ENCODE measurements at regions of chr12 and their contacts with region 1.

Region 1: GRCh38 chr12:49358483-49359141 is 8.7 kb upstream of the SPATS2 start:
- DNase-seq: no peak
- H3K4me3 ChIP-seq: no peak overlapping the region
- H3K27ac ChIP-seq: no peak overlapping the region
- H3K27me3 ChIP-seq: no peaks in the 10 kb centered on the region
- CTCF ChIP-seq: peak; percentile 82

Region 2: GRCh38 chr12:49288412-49288853 is 70.2 kb before region 1 on chr12:
- CTCF ChIA-PET with region 1: interaction called, 56 read pairs
- POLR2A ChIA-PET with region 1: no interaction called
- DNase-seq: no peak
- H3K4me3 ChIP-seq: no peak overlapping the region
- H3K27ac ChIP-seq: no peak overlapping the region
- H3K27me3 ChIP-seq: peaks cover 16% of the 10 kb centered on the region
- CTCF ChIP-seq: peak; percentile 79

Region 3: DNA sequence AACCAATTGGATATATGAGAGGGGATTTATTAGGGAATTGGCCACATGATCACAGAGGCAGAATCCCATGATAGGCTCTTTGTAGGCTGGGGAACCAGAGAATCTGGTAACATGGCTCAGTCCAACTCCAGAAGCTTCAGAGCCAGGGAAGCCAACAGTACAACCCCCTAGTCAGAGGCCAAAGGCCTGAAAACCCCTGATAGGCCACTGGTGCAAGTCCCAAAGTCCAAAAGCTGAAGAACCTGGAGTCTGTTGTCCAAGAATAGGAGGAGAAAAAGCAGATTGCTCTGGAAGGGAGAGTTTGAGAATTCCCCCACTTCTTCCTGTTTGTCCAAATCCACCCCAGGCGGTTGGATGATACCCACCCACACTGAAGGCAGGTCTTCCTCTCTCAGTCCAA is 43.8 kb before region 1 on chr12:
- CTCF ChIA-PET with region 1: no interaction called
- POLR2A ChIA-PET with region 1: no interaction called
- DNase-seq: no peak
- H3K4me3 ChIP-seq: no peak overlapping the region
- H3K27ac ChIP-seq: no peak overlapping the region
- H3K27me3 ChIP-seq: peaks cover 4% of the 10 kb centered on the region
- CTCF ChIP-seq: no peak

Region 4: DNA sequence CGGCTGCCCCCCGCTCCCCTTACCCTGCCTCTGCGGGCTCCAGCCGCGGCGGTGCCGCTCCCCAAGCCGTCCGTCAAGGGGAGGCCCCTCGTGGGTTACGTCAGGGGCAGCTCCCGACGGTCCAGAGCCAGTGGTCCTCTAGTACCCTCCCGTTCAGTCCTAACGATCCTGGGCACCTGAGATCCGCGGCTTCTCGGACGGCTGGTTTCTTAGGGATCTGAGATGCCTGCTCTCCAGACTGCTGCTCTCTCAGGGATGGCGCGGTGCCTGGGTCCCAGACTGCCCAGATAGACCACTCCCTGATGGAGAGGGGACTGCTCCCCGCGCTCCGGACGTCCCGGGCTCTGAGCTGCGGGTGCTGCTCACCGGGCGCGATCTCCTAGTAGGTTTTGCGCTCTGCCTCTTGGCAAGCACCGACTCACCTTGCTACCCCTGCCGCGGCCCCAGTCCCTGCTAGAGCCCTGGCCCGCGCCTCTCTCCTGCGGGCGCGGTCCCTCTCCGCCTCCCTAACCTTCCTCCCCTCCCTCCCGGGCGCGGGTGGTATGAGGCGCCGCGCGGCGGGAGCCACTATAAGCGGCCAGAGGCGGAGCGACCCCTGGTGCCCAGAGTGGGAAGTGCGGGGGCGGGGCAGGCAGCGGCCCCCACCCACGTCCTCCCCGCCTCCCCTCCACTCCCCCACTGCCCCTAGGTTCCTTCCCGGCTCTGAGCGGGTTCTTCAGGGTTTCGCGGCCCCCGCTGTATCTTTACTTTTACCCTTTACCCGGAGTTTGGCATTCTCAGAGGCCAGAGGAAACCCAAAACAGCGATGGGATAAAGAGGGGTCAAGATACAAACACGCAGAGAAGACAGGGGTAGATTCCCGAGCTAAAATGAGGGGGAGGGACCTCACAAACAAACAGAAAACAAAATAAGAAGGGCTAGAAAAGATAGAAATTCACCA is 21.7 kb before region 1 on chr12 and contains the start of gene C1QL4:
- CTCF ChIA-PET with region 1: interaction called, 72 read pairs
- POLR2A ChIA-PET with region 1: no interaction called
- DNase-seq: no peak
- H3K4me3 ChIP-seq: peak within 1 kb of the TSS; percentile 52
- H3K27ac ChIP-seq: no peak within 1 kb of the TSS
- H3K27me3 ChIP-seq: peaks cover 72% of the 10 kb centered on the region
- CTCF ChIP-seq: peak; percentile 83
- polyA plus RNA-seq, gene C1QL4: 0.06 TPM in 1 of 2 replicates, not detected in the other

Region 5: GRCh38 chr12:49397000-49397399 is 38.4 kb after region 1 on chr12:
- CTCF ChIA-PET with region 1: interaction called, 10 read pairs
- POLR2A ChIA-PET with region 1: no interaction called
- DNase-seq: no peak
- H3K4me3 ChIP-seq: no peak overlapping the region
- H3K27ac ChIP-seq: no peak overlapping the region
- H3K27me3 ChIP-seq: no peaks in the 10 kb centered on the region
- CTCF ChIP-seq: no peak

Region 6: DNA sequence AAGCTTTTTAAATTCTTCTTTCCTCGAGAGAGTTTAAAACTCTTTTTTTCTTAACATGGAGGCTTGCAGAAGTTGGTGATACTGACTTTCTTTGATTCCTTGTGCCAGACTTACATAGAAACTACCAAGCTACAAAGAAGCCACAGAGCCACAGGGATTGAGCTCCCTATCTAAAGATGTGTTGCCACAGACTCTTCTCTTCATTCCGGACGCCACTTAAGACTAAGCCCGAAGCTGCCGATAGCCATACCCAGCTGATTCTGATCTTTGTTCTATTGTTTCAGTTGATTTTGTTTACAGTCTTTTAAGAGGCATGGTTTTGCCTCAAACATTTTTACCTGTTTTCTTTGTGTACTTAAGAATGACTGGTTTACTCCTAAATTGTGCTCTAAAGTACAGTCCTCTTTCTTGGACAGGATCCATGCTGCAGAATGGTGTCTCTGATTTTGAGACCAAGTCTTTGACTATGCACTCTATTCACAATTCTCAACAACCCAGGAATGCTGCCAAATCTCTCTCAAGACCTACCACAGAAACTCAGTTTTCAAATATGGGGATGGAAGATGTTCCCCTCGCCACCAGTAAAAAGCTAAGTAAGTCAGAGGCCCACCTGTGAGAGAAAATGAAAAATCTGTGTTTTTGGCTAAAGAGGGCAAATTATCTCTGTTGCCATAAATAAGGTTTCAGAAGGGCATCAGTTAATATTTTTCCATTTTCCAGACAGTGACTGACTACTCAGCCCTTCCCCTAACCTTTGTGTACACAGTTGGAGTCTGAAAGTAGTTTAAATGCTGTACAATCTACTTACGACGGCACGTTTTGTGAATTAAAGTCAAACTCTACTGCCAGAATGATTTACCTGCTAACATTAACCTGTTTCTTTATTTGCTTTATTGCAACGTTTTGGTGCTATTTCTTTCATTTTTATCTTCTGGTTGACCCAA is 138.1 kb after region 1 on chr12:
- CTCF ChIA-PET with region 1: interaction called, 10 read pairs
- POLR2A ChIA-PET with region 1: no interaction called
- DNase-seq: no peak
- H3K4me3 ChIP-seq: no peak overlapping the region
- H3K27ac ChIP-seq: no peak overlapping the region
- H3K27me3 ChIP-seq: no peaks in the 10 kb centered on the region
- CTCF ChIP-seq: no peak

Region 7: DNA sequence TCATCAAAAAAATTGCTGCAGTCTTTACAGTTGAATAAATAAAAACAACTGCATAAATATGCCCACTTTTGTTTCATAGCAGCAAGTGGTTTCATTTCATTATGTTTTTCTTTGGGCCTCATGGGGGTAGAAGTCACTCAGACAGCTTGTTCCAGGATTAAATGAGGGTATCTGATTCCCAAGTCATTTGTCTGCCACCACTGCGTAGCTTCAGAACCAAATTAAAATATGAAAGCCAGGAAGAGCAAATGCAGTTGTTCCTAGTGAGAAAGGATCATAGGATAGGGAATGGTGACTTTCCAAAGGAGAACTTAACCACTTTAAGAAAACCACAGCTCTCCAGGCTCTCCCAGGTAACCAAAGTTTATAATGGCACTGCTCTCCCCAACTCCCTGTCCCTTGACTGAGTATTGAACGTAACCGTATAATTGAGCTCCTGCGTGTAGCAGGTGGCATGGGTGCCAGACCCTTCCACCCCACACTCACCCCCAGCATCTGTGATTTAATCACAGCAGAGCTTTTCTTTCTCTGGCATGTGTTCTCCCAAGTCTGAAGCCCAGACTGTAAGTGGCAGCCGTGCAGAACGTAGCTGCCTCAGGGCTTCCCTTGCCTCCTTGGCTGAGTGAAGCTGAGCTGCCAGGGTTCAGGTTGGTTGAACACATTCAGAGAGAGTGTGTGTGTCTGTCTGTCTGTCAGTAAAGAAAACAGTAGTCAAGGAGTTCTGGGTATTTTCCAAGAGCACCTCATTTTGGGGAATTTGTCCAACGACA is 168.9 kb after region 1 on chr12:
- CTCF ChIA-PET with region 1: interaction called, 45 read pairs
- POLR2A ChIA-PET with region 1: no interaction called
- DNase-seq: no peak
- H3K4me3 ChIP-seq: no peak overlapping the region
- H3K27ac ChIP-seq: no peak overlapping the region
- H3K27me3 ChIP-seq: no peaks in the 10 kb centered on the region
- CTCF ChIP-seq: no peak

Region 8: DNA sequence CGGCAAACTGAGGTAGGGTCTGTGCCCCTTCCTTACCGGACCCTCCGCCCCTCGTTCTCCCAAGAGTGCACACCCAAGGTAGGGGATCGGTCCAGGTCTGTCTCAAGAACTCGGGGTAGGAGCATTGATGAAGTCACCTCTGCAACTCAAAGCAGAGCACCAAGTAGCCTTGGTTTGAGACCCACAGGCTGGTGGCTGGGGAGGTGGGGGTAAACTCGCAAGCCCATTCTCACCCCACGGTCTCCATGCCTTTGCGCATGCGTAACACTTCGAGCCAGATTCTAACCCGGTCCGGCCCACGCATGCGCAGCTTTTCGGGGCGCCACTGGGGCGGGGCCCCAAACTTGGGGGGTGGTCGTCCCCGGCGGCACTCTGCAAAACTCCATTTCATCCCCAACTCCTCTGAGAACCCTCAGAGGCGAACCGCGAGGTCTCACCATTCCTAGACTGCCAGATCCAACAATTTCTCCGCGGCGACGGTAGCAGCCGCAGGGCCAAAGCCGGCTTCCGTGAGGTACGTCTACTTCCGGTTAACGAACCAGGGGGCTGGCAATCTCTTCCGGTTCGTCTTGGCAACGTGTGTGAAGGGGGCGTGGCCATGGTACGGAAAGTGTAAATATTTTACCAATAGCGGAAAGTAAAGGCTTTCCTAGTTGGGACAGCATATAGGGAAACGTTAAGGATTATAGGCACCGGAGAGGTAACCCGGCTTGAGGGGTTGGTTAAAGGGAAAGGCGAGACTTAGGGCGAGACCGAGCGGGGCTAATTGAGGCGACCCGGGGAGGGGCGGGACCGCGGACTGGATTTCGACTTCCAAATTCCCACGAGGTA is 209.2 kb after region 1 on chr12 and contains the start of gene MCRS1:
- CTCF ChIA-PET with region 1: interaction called, 12 read pairs
- POLR2A ChIA-PET with region 1: interaction called, 5 read pairs
- DNase-seq: peak; percentile 75
- H3K4me3 ChIP-seq: peak within 1 kb of the TSS; percentile 100
- H3K27ac ChIP-seq: peak within 1 kb of the TSS; percentile 87
- H3K27me3 ChIP-seq: no peaks in the 10 kb centered on the region
- CTCF ChIP-seq: no peak
- polyA plus RNA-seq, gene MCRS1: 47.0 and 54.2 TPM in 2 replicates

Measured in AG04450 (cell line).